Mammary epithelial cell (primary cell): ENCODE measurements at regions of chr2 and their contacts with region 1.

Region 1: DNA sequence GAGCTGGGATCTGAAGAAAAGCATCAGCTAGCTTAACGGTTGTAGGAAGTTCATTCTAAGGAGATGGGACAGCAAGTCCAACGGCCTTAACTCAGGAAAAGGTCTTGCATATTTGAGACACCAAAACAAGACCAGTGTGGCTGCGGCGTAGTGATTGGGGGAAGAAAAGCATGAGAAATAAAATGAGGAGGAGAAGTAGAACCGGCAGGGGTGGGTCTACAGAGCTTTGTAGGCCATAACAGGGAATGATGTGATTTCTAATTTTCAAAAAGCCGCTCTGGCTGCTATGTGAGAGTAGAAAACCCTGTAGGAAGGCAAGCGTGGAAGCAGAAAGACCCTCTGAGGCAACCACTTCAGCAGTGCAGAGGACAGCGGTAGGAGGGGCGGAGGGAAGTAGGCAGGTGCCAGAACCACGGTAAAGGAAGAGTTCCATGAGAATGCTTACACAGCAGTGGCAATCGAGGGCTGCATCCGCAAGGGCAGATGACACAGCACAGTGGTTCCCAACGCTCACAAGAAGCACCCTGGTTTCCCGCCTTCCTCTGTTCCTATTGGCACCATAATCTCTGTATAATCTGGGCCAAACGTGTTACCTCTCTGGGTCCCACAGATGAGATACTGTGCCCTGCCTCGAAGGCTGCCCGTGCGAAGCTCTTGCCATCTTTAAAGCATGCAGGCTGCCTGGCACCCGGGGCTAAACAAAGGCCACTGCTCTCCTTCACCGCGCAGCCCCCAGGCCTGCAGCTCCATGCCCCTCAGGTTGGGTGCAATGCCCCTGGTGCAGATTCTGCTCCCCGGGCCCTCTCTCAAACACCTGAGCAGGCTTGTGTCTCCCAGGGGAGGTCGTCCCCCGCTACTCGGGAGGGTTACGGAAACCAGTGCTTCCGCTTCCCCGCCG is 791 bp downstream of the ANKRD39 start:
- DNase-seq: peak; percentile 20
- H3K4me3 ChIP-seq: peak overlapping the region; percentile 54 to 78 (median 76)
- H3K27ac ChIP-seq: peak overlapping the region; percentile 5
- H3K4me1 ChIP-seq: peaks cover 26% of the 10 kb centered on the region
- H3K27me3 ChIP-seq: no peaks in the 10 kb centered on the region
- CTCF ChIP-seq: no peak

Region 2: GRCh38 chr2:96760036-96760985 is 96.7 kb before region 1 on chr2 and contains the start of gene CNNM4:
- CTCF ChIA-PET with region 1: interaction called, 3 read pairs
- dilution Hi-C with region 1: no loop called
- in situ Hi-C with region 1: no loop called
- intact Hi-C with region 1: loop called (anchors 5 kb)
- DNase-seq: peak; percentile 90
- H3K4me3 ChIP-seq: peak within 1 kb of the TSS; percentile 46 to 86 (median 78)
- H3K27ac ChIP-seq: no peak within 1 kb of the TSS
- H3K4me1 ChIP-seq: peaks cover 51% of the 10 kb centered on the region
- H3K27me3 ChIP-seq: no peaks in the 10 kb centered on the region
- CTCF ChIP-seq: peak in 1 of 2 donors; percentile 24
- total RNA-seq, gene CNNM4: 8.1 to 8.2 TPM

Region 3: GRCh38 chr2:96888072-96889011 is 31.3 kb after region 1 on chr2:
- CTCF ChIA-PET with region 1: no interaction called
- dilution Hi-C with region 1: no loop called
- in situ Hi-C with region 1: no loop called
- intact Hi-C with region 1: no loop called
- DNase-seq: peak; percentile 50
- H3K4me3 ChIP-seq: no peak overlapping the region
- H3K27ac ChIP-seq: no peak overlapping the region
- H3K4me1 ChIP-seq: peaks cover 16% of the 10 kb centered on the region
- H3K27me3 ChIP-seq: no peaks in the 10 kb centered on the region
- CTCF ChIP-seq: no peak

Region 4: GRCh38 chr2:96907115-96908041 is 50.4 kb after region 1 on chr2:
- CTCF ChIA-PET with region 1: no interaction called
- dilution Hi-C with region 1: no loop called
- in situ Hi-C with region 1: loop called in 1 of 2 experiments (anchors 5 kb)
- intact Hi-C with region 1: loop called (anchors 1 kb)
- DNase-seq: no peak
- H3K4me3 ChIP-seq: no peak overlapping the region
- H3K27ac ChIP-seq: no peak overlapping the region
- H3K4me1 ChIP-seq: no peaks in the 10 kb centered on the region
- H3K27me3 ChIP-seq: no peaks in the 10 kb centered on the region
- CTCF ChIP-seq: no peak

Region 5: GRCh38 chr2:96913398-96914202 is 56.6 kb after region 1 on chr2:
- CTCF ChIA-PET with region 1: no interaction called
- dilution Hi-C with region 1: no loop called
- in situ Hi-C with region 1: loop called in 1 of 2 experiments (anchors 5 kb)
- intact Hi-C with region 1: no loop called
- DNase-seq: no peak
- H3K4me3 ChIP-seq: no peak overlapping the region
- H3K27ac ChIP-seq: no peak overlapping the region
- H3K4me1 ChIP-seq: peaks cover 7% of the 10 kb centered on the region
- H3K27me3 ChIP-seq: no peaks in the 10 kb centered on the region
- CTCF ChIP-seq: no peak

Region 6: GRCh38 chr2:96951093-96951654 is 94.1 kb after region 1 on chr2:
- CTCF ChIA-PET with region 1: interaction called, 14 read pairs
- dilution Hi-C with region 1: no loop called
- in situ Hi-C with region 1: loop called (anchors 5 kb)
- intact Hi-C with region 1: loop called (anchors 1 kb)
- DNase-seq: peak; percentile 52
- H3K4me3 ChIP-seq: peak overlapping the region in 1 of 3 experiments; percentile 23
- H3K27ac ChIP-seq: no peak overlapping the region
- H3K4me1 ChIP-seq: peaks cover 6% of the 10 kb centered on the region
- H3K27me3 ChIP-seq: no peaks in the 10 kb centered on the region
- CTCF ChIP-seq: peak; percentile 77 to 96

Region 7: GRCh38 chr2:96960153-96960961 is 103.3 kb after region 1 on chr2:
- CTCF ChIA-PET with region 1: no interaction called
- dilution Hi-C with region 1: no loop called
- in situ Hi-C with region 1: loop called in 1 of 2 experiments (anchors 5 kb)
- intact Hi-C with region 1: loop called (anchors 1 kb)
- DNase-seq: peak; percentile 54
- H3K4me3 ChIP-seq: no peak overlapping the region
- H3K27ac ChIP-seq: no peak overlapping the region
- H3K4me1 ChIP-seq: peaks cover 10% of the 10 kb centered on the region
- H3K27me3 ChIP-seq: no peaks in the 10 kb centered on the region
- CTCF ChIP-seq: peak; percentile 91 to 95

Region 8: GRCh38 chr2:97890093-97890492 is 1033.1 kb after region 1 on chr2:
- CTCF ChIA-PET with region 1: no interaction called
- dilution Hi-C with region 1: no loop called
- in situ Hi-C with region 1: no loop called
- intact Hi-C with region 1: no loop called
- DNase-seq: no peak
- H3K4me3 ChIP-seq: no peak overlapping the region
- H3K27ac ChIP-seq: no peak overlapping the region
- H3K4me1 ChIP-seq: no peaks in the 10 kb centered on the region
- H3K27me3 ChIP-seq: no peaks in the 10 kb centered on the region
- CTCF ChIP-seq: no peak

Region 9: DNA sequence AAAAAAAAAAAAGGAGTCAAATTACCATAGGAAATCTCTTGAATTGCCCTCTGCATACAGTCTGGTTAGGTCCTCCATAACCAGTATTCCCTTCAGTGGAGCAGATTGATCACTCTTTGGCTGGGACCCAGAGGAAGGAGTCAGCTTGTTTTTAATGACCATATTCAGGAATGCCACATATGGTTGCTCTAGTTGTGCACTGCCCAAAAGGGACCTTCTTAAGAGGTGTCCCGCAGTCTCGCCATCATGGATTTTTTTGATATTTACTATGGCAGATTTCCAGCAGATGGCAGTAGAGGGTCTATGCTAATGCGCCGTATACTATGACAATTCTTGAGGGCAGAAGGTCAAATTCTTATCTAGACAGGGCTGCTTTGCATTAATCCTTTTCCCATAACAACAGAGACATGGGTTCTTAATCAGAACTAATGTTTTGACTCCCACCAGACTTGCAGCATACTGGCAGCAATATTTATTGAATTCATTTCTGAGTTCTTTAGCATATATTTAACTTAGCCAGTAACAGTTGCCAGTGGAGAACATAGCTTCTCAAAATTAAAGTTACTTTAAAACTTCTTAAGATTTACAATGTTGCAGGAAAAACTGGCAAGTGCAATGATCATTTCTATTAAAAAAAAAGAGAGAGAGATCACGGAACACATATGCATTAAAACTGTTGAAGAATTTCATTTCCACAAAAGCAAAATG is 1555.9 kb after region 1 on chr2:
- CTCF ChIA-PET with region 1: no interaction called
- dilution Hi-C with region 1: no loop called
- in situ Hi-C with region 1: no loop called
- intact Hi-C with region 1: no loop called
- DNase-seq: peak; percentile 41
- H3K4me3 ChIP-seq: no peak overlapping the region
- H3K27ac ChIP-seq: no peak overlapping the region
- H3K4me1 ChIP-seq: no peaks in the 10 kb centered on the region
- H3K27me3 ChIP-seq: no peaks in the 10 kb centered on the region
- CTCF ChIP-seq: peak; percentile 39 to 73